CD4-positive, alpha-beta memory T cell (primary cell): ENCODE measurements at regions of chr14 and their contacts with region 1.

Region 1: GRCh38 chr14:54902521-54903420 is at the start of gene GCH1:
- DNase-seq: peak; percentile 73 to 83 (median 77)
- H3K4me3 ChIP-seq: peak within 1 kb of the TSS; percentile 37 to 99
- H3K4me3 Mint-ChIP-seq: peak within 1 kb of the TSS; percentile 90 to 96 (median 92)
- H3K27ac ChIP-seq: peak within 1 kb of the TSS; percentile 96
- H3K27ac Mint-ChIP-seq: peak within 1 kb of the TSS; percentile 89 to 96 (median 94)
- H3K4me1 ChIP-seq: peaks cover 27% of the 10 kb centered on the region
- H3K4me1 Mint-ChIP-seq: peaks cover 14 to 34% (median 26%) of the 10 kb centered on the region in 4 donors
- H3K27me3 ChIP-seq: no peaks in the 10 kb centered on the region
- H3K27me3 Mint-ChIP-seq: no peaks in the 10 kb centered on the region
- total RNA-seq, gene GCH1: 28.4 to 30.2 TPM

Region 2: DNA sequence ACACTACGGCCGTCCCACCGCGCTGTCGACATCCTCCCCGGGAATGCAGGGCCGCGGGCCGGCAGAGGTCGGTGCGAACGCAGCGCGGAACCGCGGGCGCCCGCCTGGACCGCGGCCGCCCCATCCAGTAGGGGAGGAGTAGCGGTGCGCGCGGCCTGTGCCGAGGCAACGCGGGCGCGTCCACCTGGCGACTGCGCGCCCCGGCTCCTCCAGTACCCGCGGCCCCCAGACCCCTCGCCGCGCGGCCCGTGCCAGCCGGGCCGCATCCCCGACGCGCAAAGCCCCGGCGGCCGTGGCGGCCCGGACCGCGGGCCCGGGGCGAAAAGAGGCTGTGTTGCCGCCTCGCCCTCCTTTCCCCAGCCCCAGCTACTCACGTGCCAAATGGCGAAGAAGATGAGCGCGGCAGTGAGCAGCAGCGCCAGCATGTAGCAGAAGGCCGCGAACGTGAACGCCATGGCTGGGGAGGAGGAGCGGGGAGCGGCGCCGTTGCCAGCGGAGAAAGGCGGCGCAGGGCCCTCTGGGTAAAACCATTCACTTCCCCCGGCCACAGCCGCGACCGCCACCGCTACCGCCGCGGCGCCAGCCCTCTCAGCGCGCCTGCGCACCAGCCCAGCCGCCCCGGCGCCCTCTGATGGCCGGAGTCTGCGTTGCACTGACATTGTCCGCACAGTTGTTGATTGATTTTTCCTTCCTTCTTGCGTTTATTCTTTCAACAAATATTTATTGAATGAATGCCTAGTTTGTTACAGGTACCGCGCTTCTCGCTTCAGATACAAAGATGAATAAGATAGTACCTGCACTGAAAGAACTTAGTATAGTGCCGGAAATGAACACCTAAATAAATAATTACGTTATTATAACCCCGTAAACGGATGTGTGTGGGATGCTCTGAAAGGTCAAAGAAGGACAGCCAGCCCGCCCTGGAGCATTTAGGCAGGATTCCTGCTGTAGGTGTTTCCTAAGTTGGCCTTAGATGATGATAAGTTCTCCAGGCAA is 461.6 kb before region 1 on chr14 and contains the start of gene CNIH1:
- CTCF ChIA-PET with region 1: no interaction called
- POLR2A ChIA-PET with region 1: no interaction called
- intact Hi-C with region 1: loop called (anchors 5 kb)
- DNase-seq: peak; percentile 88 to 96 (median 93)
- H3K4me3 ChIP-seq: peak within 1 kb of the TSS; percentile 45 to 61
- H3K4me3 Mint-ChIP-seq: peak within 1 kb of the TSS; percentile 83 to 95 (median 92)
- H3K27ac ChIP-seq: peak within 1 kb of the TSS; percentile 55
- H3K27ac Mint-ChIP-seq: peak within 1 kb of the TSS; percentile 88 to 98 (median 94)
- H3K4me1 ChIP-seq: peaks cover 49% of the 10 kb centered on the region
- H3K4me1 Mint-ChIP-seq: peaks cover 29 to 55% (median 36%) of the 10 kb centered on the region in 4 donors
- H3K27me3 ChIP-seq: no peaks in the 10 kb centered on the region
- H3K27me3 Mint-ChIP-seq: peaks cover 1 to 2% of the 10 kb centered on the region in 2 donors
- total RNA-seq, gene CNIH1: 46.9 to 54.2 TPM

Region 3: DNA sequence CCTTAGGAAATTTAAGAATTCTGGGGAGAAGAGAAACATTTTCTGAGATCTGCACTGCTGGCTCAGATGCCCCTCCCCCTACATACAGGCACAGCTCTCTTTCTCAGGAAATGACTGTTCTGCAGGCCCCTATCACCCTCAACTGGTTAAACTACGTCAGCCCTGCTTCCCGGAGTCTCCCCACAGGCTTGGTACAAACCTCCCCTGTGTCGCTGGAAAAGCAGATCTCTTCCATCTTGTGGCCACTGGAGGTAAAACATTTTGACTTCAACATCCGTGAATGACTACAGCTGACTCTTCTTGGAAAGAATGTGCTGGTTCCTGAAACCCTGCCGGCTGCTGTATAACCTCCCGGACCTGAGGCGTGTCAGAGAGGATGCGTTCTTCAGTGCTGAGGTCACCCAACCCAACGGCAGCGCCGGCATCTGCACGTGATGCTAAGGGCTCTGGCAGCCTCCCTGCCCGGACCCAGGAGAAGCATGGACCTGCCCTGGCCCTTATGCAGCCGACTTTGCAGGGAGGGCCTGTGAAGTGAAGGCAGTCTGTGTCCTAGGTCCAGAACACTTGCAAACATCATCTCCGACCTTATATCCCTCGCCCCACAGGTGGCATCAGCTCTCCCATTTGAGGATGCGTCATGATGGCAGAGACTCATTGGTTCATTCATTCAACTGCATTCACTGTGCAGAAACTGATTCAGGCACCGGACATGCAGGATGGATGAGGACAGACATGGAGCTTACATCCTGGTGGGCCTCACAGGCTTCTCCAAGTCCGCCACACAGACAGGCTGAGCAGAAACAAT is 129.4 kb before region 1 on chr14:
- CTCF ChIA-PET with region 1: interaction called, 5 read pairs
- POLR2A ChIA-PET with region 1: interaction called, 7 read pairs
- intact Hi-C with region 1: loop called (anchors 1 kb)
- DNase-seq: peak; percentile 63 to 92 (median 73)
- H3K4me3 ChIP-seq: peak overlapping the region in 1 of 2 donors; percentile 53
- H3K4me3 Mint-ChIP-seq: peak overlapping the region; percentile 16 to 83 (median 61)
- H3K27ac ChIP-seq: peak overlapping the region; percentile 55
- H3K27ac Mint-ChIP-seq: peak overlapping the region; percentile 82 to 98 (median 89)
- H3K4me1 ChIP-seq: peaks cover 22% of the 10 kb centered on the region
- H3K4me1 Mint-ChIP-seq: peaks cover 18 to 30% (median 22%) of the 10 kb centered on the region in 4 donors
- H3K27me3 ChIP-seq: no peaks in the 10 kb centered on the region
- H3K27me3 Mint-ChIP-seq: peaks cover 1 to 3% of the 10 kb centered on the region in 2 donors

Region 4: GRCh38 chr14:54839701-54840119 is 63.1 kb before region 1 on chr14:
- CTCF ChIA-PET with region 1: no interaction called
- POLR2A ChIA-PET with region 1: no interaction called
- intact Hi-C with region 1: loop called (anchors 5 kb)
- DNase-seq: no peak
- H3K4me3 ChIP-seq: no peak overlapping the region
- H3K4me3 Mint-ChIP-seq: no peak overlapping the region
- H3K27ac ChIP-seq: no peak overlapping the region
- H3K27ac Mint-ChIP-seq: peak overlapping the region in 1 of 7 donors; percentile 79
- H3K4me1 ChIP-seq: no peaks in the 10 kb centered on the region
- H3K4me1 Mint-ChIP-seq: peaks cover 0 to 4% (median under 1%) of the 10 kb centered on the region in 4 donors
- H3K27me3 ChIP-seq: no peaks in the 10 kb centered on the region
- H3K27me3 Mint-ChIP-seq: no peaks in the 10 kb centered on the region

Region 5: DNA sequence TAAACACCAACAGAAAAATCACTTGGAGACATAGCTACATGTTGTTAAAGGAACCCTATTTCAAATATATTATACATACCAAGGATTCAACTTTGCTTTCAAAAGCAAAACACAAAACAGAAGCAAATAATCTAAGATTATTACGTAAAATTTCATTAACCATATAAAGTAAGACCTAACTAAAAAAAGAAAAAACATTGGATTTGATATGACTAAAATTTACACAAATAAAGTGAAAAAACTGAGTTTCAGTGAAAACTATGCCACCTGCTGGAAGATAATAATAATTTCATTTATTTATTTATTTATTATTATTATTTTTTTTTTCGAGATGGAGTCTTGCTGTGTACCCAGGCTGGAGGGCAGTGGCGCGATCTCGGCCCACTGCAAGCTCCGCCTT is 78.9 kb after region 1 on chr14:
- CTCF ChIA-PET with region 1: interaction called, 3 read pairs
- POLR2A ChIA-PET with region 1: interaction called, 3 read pairs
- intact Hi-C with region 1: loop called (anchors 5 kb)
- DNase-seq: no peak
- H3K4me3 ChIP-seq: no peak overlapping the region
- H3K4me3 Mint-ChIP-seq: no peak overlapping the region
- H3K27ac ChIP-seq: no peak overlapping the region
- H3K27ac Mint-ChIP-seq: no peak overlapping the region
- H3K4me1 ChIP-seq: no peaks in the 10 kb centered on the region
- H3K4me1 Mint-ChIP-seq: peaks cover 0 to 3% (median 0%) of the 10 kb centered on the region in 4 donors
- H3K27me3 ChIP-seq: no peaks in the 10 kb centered on the region
- H3K27me3 Mint-ChIP-seq: no peaks in the 10 kb centered on the region

Region 6: DNA sequence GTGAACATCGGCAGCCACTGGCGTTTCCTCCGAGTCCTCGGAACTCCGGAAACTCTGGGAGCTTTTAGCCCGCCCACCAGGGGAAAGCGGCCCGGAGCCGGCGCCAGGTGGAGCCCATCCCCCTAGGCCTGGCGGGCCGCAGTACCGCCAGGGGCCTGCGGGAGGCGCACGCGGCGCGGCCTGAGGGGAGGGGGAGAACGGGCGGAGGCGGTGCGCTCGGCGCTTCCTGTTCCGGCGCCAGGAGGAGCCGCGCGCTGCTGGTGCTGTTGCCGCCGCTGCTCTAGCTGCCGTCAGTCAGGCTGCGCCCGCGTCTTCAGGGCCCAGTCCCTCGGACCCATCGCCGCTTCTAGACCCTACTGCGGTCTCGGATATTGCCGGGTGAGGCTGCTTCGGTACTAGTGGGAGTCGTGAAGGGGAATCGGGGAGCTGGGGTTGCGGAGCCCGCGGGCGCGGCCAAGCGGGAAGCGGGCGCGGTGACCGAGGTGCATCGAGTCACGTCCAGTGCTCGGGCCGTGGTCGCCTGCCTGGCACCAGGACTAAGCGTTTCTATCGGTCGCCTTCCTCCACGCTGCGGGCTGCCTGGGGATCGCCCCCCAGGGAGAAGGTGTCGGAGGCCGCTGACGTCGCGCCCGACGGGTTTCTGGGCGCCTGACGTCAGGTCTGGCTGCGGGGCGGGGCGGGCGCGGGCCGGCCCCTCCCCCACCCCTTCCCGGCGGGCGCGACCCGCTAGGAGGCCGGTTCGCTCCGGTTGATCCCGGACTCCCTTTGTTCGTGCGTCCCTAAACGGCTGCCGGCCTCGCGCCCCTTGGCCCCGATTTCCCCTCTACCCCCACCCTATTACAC is 148.9 kb after region 1 on chr14 and contains the start of gene MAPK1IP1L:
- CTCF ChIA-PET with region 1: interaction called, 14 read pairs
- POLR2A ChIA-PET with region 1: interaction called, 25 read pairs
- intact Hi-C with region 1: loop called (anchors 1 kb)
- DNase-seq: peak; percentile 88 to 95 (median 91)
- H3K4me3 ChIP-seq: peak within 1 kb of the TSS; percentile 67 to 98
- H3K4me3 Mint-ChIP-seq: peak within 1 kb of the TSS; percentile 87 to 95 (median 92)
- H3K27ac ChIP-seq: peak within 1 kb of the TSS; percentile 100
- H3K27ac Mint-ChIP-seq: peak within 1 kb of the TSS; percentile 95 to 98 (median 96)
- H3K4me1 ChIP-seq: peaks cover 48% of the 10 kb centered on the region
- H3K4me1 Mint-ChIP-seq: peaks cover 27 to 55% (median 39%) of the 10 kb centered on the region in 4 donors
- H3K27me3 ChIP-seq: no peaks in the 10 kb centered on the region
- H3K27me3 Mint-ChIP-seq: no peaks in the 10 kb centered on the region
- total RNA-seq, gene MAPK1IP1L: 67.2 to 73.4 TPM

Region 7: GRCh38 chr14:55170526-55170925 is 267.8 kb after region 1 on chr14:
- CTCF ChIA-PET with region 1: no interaction called
- POLR2A ChIA-PET with region 1: no interaction called
- intact Hi-C with region 1: no loop called
- DNase-seq: no peak
- H3K4me3 ChIP-seq: no peak overlapping the region
- H3K4me3 Mint-ChIP-seq: no peak overlapping the region
- H3K27ac ChIP-seq: no peak overlapping the region
- H3K27ac Mint-ChIP-seq: no peak overlapping the region
- H3K4me1 ChIP-seq: no peaks in the 10 kb centered on the region
- H3K4me1 Mint-ChIP-seq: no peaks in the 10 kb centered on the region
- H3K27me3 ChIP-seq: no peaks in the 10 kb centered on the region
- H3K27me3 Mint-ChIP-seq: no peaks in the 10 kb centered on the region